ENCODE measurements at regions of chr14 and their contacts with region 1.

Region 1: GRCh38 chr14:95442633-95443021 is 73.8 kb downstream of the SYNE3 start:
- DNase-seq: peak; percentile 51
- ATAC-seq: peak; percentile 98
- H3K4me3 ChIP-seq: no peak overlapping the region
- H3K27ac ChIP-seq: no peak overlapping the region
- H3K4me1 ChIP-seq: no peaks in the 10 kb centered on the region
- H3K27me3 ChIP-seq: no peaks in the 10 kb centered on the region
- CTCF ChIP-seq: peak; percentile 87

Region 2: DNA sequence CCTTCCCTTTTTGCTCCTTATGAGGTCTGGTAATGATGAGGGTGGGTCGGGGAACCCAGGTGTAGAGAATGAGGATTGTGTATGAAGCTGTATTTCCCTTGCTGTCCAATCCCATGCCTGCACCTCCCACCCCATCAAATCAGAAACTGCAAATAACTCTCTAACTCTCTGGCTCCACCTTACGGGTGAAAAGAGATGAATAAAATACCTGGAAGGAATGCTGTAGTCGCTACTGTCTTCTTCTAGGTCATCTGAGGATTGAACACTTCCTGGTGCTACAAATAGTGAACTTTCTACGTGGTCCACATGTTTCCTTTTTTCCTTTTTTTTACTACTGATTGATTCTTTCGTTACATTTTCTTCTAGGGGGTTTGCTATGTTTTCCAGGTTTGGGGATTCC is 246.3 kb before region 1 on chr14:
- CTCF ChIA-PET with region 1: no interaction called
- POLR2A ChIA-PET with region 1: no interaction called
- in situ Hi-C with region 1: no loop called
- intact Hi-C with region 1: no loop called
- DNase-seq: no peak
- ATAC-seq: no peak
- H3K4me3 ChIP-seq: no peak overlapping the region
- H3K27ac ChIP-seq: no peak overlapping the region
- H3K4me1 ChIP-seq: no peaks in the 10 kb centered on the region
- H3K27me3 ChIP-seq: no peaks in the 10 kb centered on the region
- CTCF ChIP-seq: no peak

Region 3: DNA sequence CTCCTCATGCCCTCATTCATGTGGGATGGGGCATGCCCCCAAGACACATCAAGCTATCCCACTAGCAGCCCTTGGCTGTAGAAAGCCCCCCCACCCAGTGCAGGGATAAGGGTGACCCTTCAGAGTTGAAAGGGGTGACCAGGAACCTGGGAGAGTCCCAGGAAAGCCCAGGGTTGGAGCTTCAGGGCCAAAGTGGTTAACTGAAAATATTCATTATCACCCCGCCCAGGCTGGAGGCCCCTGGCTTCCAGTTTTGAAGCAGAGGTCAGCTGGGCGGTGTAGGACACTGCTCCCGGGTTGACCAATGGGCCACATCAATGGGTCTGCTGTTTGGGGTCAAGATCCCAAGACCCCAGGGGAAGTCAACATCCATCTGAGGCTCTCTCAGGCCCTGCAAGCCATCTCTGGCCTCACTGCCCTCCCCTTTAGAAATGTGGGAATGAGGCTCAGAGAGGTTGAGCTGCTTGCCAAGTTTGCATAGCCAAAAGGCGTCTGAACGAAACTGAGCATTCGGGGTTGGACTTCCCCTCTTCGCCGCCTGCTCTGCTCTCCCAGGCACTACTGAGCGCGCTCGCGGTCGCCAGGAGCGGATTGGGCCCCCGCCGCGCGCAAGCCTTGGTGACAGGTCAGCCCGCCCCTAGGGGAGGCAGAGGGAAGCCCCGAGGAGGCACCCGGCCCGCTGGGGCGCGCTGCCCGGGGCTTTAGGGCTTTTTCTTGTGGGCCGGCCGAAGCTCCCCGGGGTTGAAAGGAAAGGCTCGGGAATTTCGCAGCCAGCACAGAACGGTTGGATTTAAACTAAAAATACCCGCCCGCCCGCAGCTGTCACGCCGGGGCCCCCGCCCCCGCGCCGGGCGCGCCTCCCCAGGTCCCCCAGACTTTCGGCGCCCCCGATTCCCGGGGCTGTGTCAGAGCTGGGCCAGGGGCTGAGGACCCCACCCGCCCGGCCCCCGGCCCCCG is 73.2 kb after region 1 on chr14:
- CTCF ChIA-PET with region 1: interaction called, 10 read pairs
- POLR2A ChIA-PET with region 1: no interaction called
- in situ Hi-C with region 1: no loop called
- intact Hi-C with region 1: no loop called
- DNase-seq: no peak
- ATAC-seq: peak; percentile 86
- H3K4me3 ChIP-seq: peak overlapping the region; percentile 49 to 55
- H3K27ac ChIP-seq: 0 out of 2 replicates have a peak overlapping the region, but pooled peaks have one; percentile 34
- H3K4me1 ChIP-seq: peaks cover 12% of the 10 kb centered on the region
- H3K27me3 ChIP-seq: no peaks in the 10 kb centered on the region
- CTCF ChIP-seq: no peak

Region 4: DNA sequence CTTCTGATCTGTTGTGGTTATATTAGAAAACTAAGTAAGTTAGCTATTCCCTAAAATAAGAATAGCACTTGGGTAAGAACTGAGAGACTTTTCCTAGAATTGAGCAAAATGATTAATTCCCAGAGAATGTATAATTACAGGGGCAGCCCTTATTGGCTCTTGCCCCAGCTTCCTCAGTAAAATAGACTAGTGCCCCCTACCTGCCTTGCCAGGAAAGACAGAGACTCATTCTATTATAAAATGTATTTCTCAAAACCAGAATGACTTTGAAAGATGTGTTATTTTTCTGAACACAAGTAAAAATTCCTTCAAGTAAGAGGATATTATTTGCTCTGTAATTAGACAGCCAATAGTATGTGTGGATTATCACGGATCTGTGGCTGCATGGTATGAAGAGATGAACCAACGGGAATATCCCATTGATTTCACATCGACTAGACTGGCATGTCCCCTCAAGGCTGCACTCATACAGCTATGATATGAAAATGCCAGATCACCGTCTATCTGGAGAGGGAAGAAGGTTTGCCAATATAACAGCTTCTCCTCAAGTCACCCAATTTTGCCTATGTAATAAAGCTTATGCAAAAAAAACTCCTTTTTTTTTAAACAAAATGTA is 84.9 kb after region 1 on chr14:
- CTCF ChIA-PET with region 1: interaction called, 24 read pairs
- POLR2A ChIA-PET with region 1: no interaction called
- in situ Hi-C with region 1: no loop called
- intact Hi-C with region 1: loop called (anchors 2 kb)
- DNase-seq: no peak
- ATAC-seq: no peak
- H3K4me3 ChIP-seq: no peak overlapping the region
- H3K27ac ChIP-seq: no peak overlapping the region
- H3K4me1 ChIP-seq: peaks cover 41% of the 10 kb centered on the region
- H3K27me3 ChIP-seq: no peaks in the 10 kb centered on the region
- CTCF ChIP-seq: peak; percentile 75

Measured in Panc1 (cell line).